ENCODE measurements at regions of chr15 and their contacts with region 1.

Region 1: DNA sequence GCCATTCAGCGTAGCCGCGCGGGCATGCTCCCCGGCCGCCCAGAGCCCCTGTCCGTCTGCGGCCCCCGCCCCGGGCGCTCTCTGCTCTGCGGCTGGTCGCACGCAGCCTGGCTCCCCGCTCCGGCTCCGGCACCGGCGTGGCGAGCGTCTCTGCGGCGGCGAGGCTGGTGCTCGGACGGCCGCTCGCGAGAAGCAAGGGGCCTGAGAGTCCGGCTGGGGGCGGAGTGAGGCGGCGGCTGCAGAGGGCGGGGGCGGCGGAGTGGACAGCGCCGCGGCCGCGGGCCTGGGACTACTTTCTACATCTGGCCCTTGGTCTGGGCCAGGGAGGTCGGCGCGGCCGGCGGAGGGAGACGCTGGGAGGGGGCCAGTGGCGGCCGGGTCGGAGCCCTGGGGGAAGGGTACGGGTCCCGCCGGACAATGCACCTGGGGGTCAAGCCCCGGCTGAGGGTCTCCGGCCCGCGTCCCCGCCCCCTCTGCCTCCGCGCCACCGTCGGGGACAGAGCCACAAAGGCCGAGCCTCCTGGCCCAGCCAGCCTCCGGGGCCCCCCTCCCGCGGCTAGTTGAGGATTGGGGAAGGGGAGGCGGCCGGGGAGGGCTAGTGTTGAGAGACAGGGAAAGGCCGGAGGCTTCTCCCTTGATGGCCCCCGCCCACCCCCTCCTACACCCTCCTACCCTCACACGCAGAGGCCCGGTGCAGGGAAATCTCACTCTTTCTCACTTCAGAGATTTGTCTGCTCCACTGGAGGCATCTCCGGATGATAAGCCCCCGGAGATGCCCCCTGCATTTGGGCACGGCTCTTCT is at the start of gene PRTG:
- DNase-seq: no peak
- ATAC-seq: no peak
- H3K4me3 Mint-ChIP-seq: peak within 1 kb of the TSS; percentile 70
- H3K27ac Mint-ChIP-seq: no peak within 1 kb of the TSS
- H3K4me1 Mint-ChIP-seq: peaks cover 4% of the 10 kb centered on the region
- H3K27me3 Mint-ChIP-seq: peaks cover 26% of the 10 kb centered on the region
- CTCF ChIP-seq: no peak
- total RNA-seq, gene PRTG: not detected in 2 replicates

Region 2: DNA sequence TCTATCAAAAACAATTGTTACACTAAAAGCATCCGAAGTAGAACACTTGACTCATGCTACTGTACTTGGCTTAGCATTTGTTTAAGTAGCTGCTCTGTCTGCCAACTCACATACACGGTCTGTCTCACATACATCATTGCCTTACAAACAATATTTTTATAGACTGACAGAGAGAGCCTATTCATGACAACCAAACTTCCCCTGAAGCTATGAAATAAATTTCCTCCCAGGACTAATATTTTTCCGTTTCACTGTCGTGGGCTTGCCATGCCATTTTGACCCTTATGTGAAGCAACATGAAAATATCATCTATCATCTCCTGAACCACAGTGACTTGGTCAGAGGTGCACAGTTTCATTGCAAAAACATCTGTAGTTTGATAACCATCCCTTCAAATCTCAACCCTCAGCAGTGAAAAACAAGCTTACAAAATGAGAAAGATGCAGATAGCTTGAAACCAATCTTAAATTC is 88.5 kb before region 1 on chr15:
- CTCF ChIA-PET with region 1: no interaction called
- POLR2A ChIA-PET with region 1: no interaction called
- intact Hi-C with region 1: loop called (anchors 10 kb)
- DNase-seq: no peak
- ATAC-seq: no peak
- H3K4me3 Mint-ChIP-seq: no peak overlapping the region
- H3K27ac Mint-ChIP-seq: no peak overlapping the region
- H3K4me1 Mint-ChIP-seq: no peaks in the 10 kb centered on the region
- H3K27me3 Mint-ChIP-seq: no peaks in the 10 kb centered on the region
- CTCF ChIP-seq: no peak